ENCODE measurements at regions of chr12 and their contacts with region 1.

Region 1: GRCh38 chr12:66409195-66409871 is 107.0 kb downstream of the HELB start:
- DNase-seq: peak in 8 of 9 donors; percentile 26 to 67 (median 58)
- ATAC-seq: peak; percentile 61
- H3K4me3 ChIP-seq: no peak overlapping the region
- H3K4me3 Mint-ChIP-seq: no peak overlapping the region
- H3K27ac ChIP-seq: no peak overlapping the region
- H3K27ac Mint-ChIP-seq: peak overlapping the region in 1 of 9 donors; percentile 46
- H3K4me1 ChIP-seq: no peaks in the 10 kb centered on the region
- H3K4me1 Mint-ChIP-seq: peaks cover 0 to 7% (median 0%) of the 10 kb centered on the region in 7 donors
- H3K27me3 ChIP-seq: no peaks in the 10 kb centered on the region
- H3K27me3 Mint-ChIP-seq: peaks cover 4 to 26% (median 14%) of the 10 kb centered on the region in 5 donors

Region 2: GRCh38 chr12:65986047-65986446 is 423.3 kb before region 1 on chr12:
- CTCF ChIA-PET with region 1: no interaction called
- POLR2A ChIA-PET with region 1: no interaction called
- intact Hi-C with region 1: loop called in 1 of 2 experiments (anchors 10 kb)
- DNase-seq: no peak
- ATAC-seq: no peak
- H3K4me3 ChIP-seq: no peak overlapping the region
- H3K4me3 Mint-ChIP-seq: no peak overlapping the region
- H3K27ac ChIP-seq: no peak overlapping the region
- H3K27ac Mint-ChIP-seq: no peak overlapping the region
- H3K4me1 ChIP-seq: no peaks in the 10 kb centered on the region
- H3K4me1 Mint-ChIP-seq: no peaks in the 10 kb centered on the region
- H3K27me3 ChIP-seq: no peaks in the 10 kb centered on the region
- H3K27me3 Mint-ChIP-seq: peaks cover 0 to 14% (median 0%) of the 10 kb centered on the region in 5 donors

Region 3: GRCh38 chr12:66047411-66048021 is 361.8 kb before region 1 on chr12:
- CTCF ChIA-PET with region 1: no interaction called
- POLR2A ChIA-PET with region 1: no interaction called
- intact Hi-C with region 1: no loop called
- DNase-seq: no peak
- ATAC-seq: peak; percentile 41
- H3K4me3 ChIP-seq: no peak overlapping the region
- H3K4me3 Mint-ChIP-seq: no peak overlapping the region
- H3K27ac ChIP-seq: no peak overlapping the region
- H3K27ac Mint-ChIP-seq: no peak overlapping the region
- H3K4me1 ChIP-seq: no peaks in the 10 kb centered on the region
- H3K4me1 Mint-ChIP-seq: no peaks in the 10 kb centered on the region
- H3K27me3 ChIP-seq: peaks cover 0 to 1% of the 10 kb centered on the region in 2 donors
- H3K27me3 Mint-ChIP-seq: peaks cover 4 to 14% (median 8%) of the 10 kb centered on the region in 5 donors

Region 4: GRCh38 chr12:66130277-66131066 is 278.9 kb before region 1 on chr12 and contains the start of gene LLPH:
- CTCF ChIA-PET with region 1: no interaction called
- POLR2A ChIA-PET with region 1: no interaction called
- intact Hi-C with region 1: loop called in 1 of 2 experiments (anchors 5 kb)
- DNase-seq: peak; percentile 72 to 88 (median 86)
- ATAC-seq: peak; percentile 97
- H3K4me3 ChIP-seq: peak within 1 kb of the TSS; percentile 99
- H3K4me3 Mint-ChIP-seq: peak within 1 kb of the TSS; percentile 92 to 98 (median 97)
- H3K27ac ChIP-seq: peak within 1 kb of the TSS; percentile 87
- H3K27ac Mint-ChIP-seq: peak within 1 kb of the TSS; percentile 95 to 99 (median 97)
- H3K4me1 ChIP-seq: peaks cover 19 to 23% of the 10 kb centered on the region in 2 donors
- H3K4me1 Mint-ChIP-seq: peaks cover 37 to 76% (median 63%) of the 10 kb centered on the region in 7 donors
- H3K27me3 ChIP-seq: no peaks in the 10 kb centered on the region
- H3K27me3 Mint-ChIP-seq: no peaks in the 10 kb centered on the region
- total RNA-seq, gene LLPH: 14.7 to 29.1 (median 28.4) TPM

Region 5: DNA sequence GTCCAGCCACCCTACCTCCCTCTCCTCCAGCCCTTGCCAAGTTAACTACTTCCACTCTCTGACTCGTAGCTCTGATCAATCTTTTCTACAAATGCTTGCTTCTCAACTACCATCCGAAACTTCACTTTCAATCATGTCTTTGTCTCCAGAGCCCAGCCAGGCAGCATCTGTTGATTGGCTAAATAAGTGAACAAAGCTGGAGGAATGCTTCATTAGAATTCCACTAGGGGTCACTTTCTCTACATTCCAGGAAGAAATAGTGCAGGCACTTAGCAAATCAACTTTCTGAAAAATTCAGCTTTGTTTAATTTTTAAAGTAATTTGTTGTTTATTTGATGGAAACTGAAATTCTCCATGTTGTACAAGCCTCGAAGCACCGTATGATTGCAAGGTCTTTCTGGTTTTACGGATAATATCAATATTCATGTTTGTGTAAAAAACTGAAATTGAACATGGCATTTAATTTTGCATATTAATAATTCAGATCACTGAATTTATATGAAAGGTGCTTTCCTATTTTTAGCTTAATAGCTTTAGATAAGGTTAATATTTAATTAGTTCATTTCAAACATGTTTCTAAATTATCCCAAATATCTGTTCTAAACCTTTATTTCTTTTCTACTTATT is 139.5 kb before region 1 on chr12:
- CTCF ChIA-PET with region 1: interaction called, 54 read pairs
- POLR2A ChIA-PET with region 1: interaction called, 3 read pairs
- intact Hi-C with region 1: loop called (anchors 1 kb)
- DNase-seq: peak in 7 of 9 donors; percentile 20 to 62 (median 52)
- ATAC-seq: peak; percentile 72
- H3K4me3 ChIP-seq: no peak overlapping the region
- H3K4me3 Mint-ChIP-seq: no peak overlapping the region
- H3K27ac ChIP-seq: no peak overlapping the region
- H3K27ac Mint-ChIP-seq: peak overlapping the region in 1 of 9 donors; percentile 55
- H3K4me1 ChIP-seq: peaks cover 0 to 13% of the 10 kb centered on the region in 2 donors
- H3K4me1 Mint-ChIP-seq: peaks cover 6 to 22% (median 9%) of the 10 kb centered on the region in 7 donors
- H3K27me3 ChIP-seq: no peaks in the 10 kb centered on the region
- H3K27me3 Mint-ChIP-seq: no peaks in the 10 kb centered on the region

Region 6: GRCh38 chr12:66693901-66694675 is 284.8 kb after region 1 on chr12:
- CTCF ChIA-PET with region 1: interaction called, 3 read pairs
- POLR2A ChIA-PET with region 1: no interaction called
- intact Hi-C with region 1: loop called in 1 of 2 experiments (anchors 5 kb)
- DNase-seq: peak in 7 of 9 donors; percentile 25 to 57 (median 50)
- ATAC-seq: peak; percentile 89
- H3K4me3 ChIP-seq: no peak overlapping the region
- H3K4me3 Mint-ChIP-seq: no peak overlapping the region
- H3K27ac ChIP-seq: no peak overlapping the region
- H3K27ac Mint-ChIP-seq: no peak overlapping the region
- H3K4me1 ChIP-seq: no peaks in the 10 kb centered on the region
- H3K4me1 Mint-ChIP-seq: peaks cover 3 to 24% (median 18%) of the 10 kb centered on the region in 7 donors
- H3K27me3 ChIP-seq: no peaks in the 10 kb centered on the region
- H3K27me3 Mint-ChIP-seq: peaks cover 0 to 8% (median 0%) of the 10 kb centered on the region in 5 donors

Region 7: GRCh38 chr12:66763467-66763866 is 354.1 kb after region 1 on chr12:
- CTCF ChIA-PET with region 1: no interaction called
- POLR2A ChIA-PET with region 1: no interaction called
- intact Hi-C with region 1: no loop called
- DNase-seq: no peak
- ATAC-seq: no peak
- H3K4me3 ChIP-seq: no peak overlapping the region
- H3K4me3 Mint-ChIP-seq: no peak overlapping the region
- H3K27ac ChIP-seq: no peak overlapping the region
- H3K27ac Mint-ChIP-seq: no peak overlapping the region
- H3K4me1 ChIP-seq: peaks cover 0 to 32% of the 10 kb centered on the region in 2 donors
- H3K4me1 Mint-ChIP-seq: peaks cover 12 to 46% (median 37%) of the 10 kb centered on the region in 7 donors
- H3K27me3 ChIP-seq: no peaks in the 10 kb centered on the region
- H3K27me3 Mint-ChIP-seq: peaks cover 0 to 32% (median 0%) of the 10 kb centered on the region in 5 donors